HCT116 (cell line): ENCODE measurements at regions of chr1 and their contacts with region 1.

Region 1: GRCh38 chr1:8873506-8874229 is 4.8 kb downstream of the ENO1 start:
- DNase-seq: peak; percentile 91
- ATAC-seq: peak; percentile 73
- H3K4me3 ChIP-seq: peak overlapping the region; percentile 20 to 88
- H3K27ac ChIP-seq: peak overlapping the region; percentile 99
- H3K4me1 ChIP-seq: peaks cover 40 to 61% of the 10 kb centered on the region in 2 experiments
- H3K27me3 ChIP-seq: no peaks in the 10 kb centered on the region
- CTCF ChIP-seq: no peak
- POLR2A ChIP-seq: no peak
- RAD21 ChIP-seq: no peak

Region 2: GRCh38 chr1:8903410-8903809 is 29.7 kb after region 1 on chr1:
- CTCF ChIA-PET with region 1: no interaction called
- POLR2A ChIA-PET with region 1: interaction called, 10 read pairs
- RAD21 ChIA-PET with region 1: no interaction called
- intact Hi-C with region 1: loop called (anchors 1 kb)
- DNase-seq: no peak
- ATAC-seq: peak; percentile 23
- H3K4me3 ChIP-seq: peak overlapping the region in 1 of 2 experiments; percentile 3; a peak in 1 of 4 replicates
- H3K27ac ChIP-seq: peak overlapping the region; percentile 60
- H3K4me1 ChIP-seq: peaks cover 64 to 71% of the 10 kb centered on the region in 2 experiments
- H3K27me3 ChIP-seq: no peaks in the 10 kb centered on the region
- CTCF ChIP-seq: no peak
- POLR2A ChIP-seq: no peak
- RAD21 ChIP-seq: peak; percentile 63

Region 3: GRCh38 chr1:8987881-8988617 is 114.4 kb after region 1 on chr1:
- CTCF ChIA-PET with region 1: no interaction called
- POLR2A ChIA-PET with region 1: no interaction called
- RAD21 ChIA-PET with region 1: no interaction called
- intact Hi-C with region 1: loop called (anchors 5 kb)
- DNase-seq: no peak
- ATAC-seq: peak; percentile 82
- H3K4me3 ChIP-seq: no peak overlapping the region
- H3K27ac ChIP-seq: no peak overlapping the region
- H3K4me1 ChIP-seq: peaks cover 13 to 35% of the 10 kb centered on the region in 2 experiments
- H3K27me3 ChIP-seq: no peaks in the 10 kb centered on the region
- CTCF ChIP-seq: peak; percentile 81 to 98 (median 91)
- POLR2A ChIP-seq: no peak
- RAD21 ChIP-seq: peak; percentile 85